Esophagus muscularis mucosa (tissue), 4 donors: ENCODE measurements at regions of chr1 and their contacts with region 1.

Region 1: DNA sequence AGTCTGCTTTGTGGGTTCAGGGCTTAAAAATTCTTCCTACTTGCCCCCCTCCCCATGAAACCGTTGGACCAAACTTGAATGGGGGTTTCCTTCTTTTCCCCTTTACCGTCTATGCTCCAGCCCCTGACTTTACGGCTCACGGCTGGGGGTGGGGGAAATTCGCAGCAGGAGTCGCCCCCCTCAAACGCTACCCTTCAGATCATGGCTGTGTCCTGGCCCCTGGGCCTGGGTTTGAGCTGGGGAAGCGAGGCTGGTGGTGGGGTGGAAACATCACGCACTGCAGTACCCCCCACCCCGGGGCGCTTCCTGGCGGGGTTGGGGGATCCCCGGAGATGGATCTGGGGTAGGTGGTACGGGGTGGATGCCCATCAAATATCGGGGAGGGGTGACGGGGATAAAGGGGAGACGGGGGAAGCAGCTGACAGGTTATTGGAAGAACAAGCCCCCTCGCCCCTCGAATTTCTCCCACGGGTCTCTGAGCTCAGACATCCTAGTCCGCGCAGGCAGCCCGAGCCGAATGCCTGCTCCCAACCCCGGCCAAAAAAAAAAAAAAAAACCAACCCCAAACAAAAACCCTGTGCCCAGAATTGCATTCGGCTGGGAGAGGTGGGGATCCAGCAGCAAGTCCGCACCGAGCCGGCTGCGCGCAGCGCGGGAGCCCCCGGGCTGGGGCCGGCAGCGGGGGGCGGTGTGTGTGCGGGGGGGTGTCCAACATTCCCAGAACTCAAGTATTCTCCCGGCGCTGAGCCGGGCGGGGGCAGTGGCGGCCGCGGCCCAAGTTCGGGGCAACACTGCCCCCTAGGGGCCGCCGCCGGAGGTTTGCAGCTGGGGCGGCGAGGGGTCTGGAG is 59.0 kb upstream of the ACOT11 start:
- DNase-seq: peak; percentile 95
- H3K4me3 ChIP-seq: peak overlapping the region; percentile 59 to 71 (median 66)
- H3K27ac ChIP-seq: peak overlapping the region; percentile 92 to 95 (median 94)
- H3K4me1 ChIP-seq: peaks cover 27 to 42% (median 38%) of the 10 kb centered on the region in 4 donors
- H3K27me3 ChIP-seq: no peaks in the 10 kb centered on the region
- CTCF ChIP-seq: peak; percentile 96 to 98 (median 97)
- EP300 ChIP-seq: no peak
- POLR2A ChIP-seq: no peak

Region 2: GRCh38 chr1:53869454-53870117 is 619.4 kb before region 1 on chr1:
- intact Hi-C with region 1: no loop called
- DNase-seq: no peak
- H3K4me3 ChIP-seq: no peak overlapping the region
- H3K27ac ChIP-seq: no peak overlapping the region
- H3K4me1 ChIP-seq: no peaks in the 10 kb centered on the region
- H3K27me3 ChIP-seq: no peaks in the 10 kb centered on the region
- CTCF ChIP-seq: no peak
- EP300 ChIP-seq: no peak
- POLR2A ChIP-seq: no peak

Region 3: DNA sequence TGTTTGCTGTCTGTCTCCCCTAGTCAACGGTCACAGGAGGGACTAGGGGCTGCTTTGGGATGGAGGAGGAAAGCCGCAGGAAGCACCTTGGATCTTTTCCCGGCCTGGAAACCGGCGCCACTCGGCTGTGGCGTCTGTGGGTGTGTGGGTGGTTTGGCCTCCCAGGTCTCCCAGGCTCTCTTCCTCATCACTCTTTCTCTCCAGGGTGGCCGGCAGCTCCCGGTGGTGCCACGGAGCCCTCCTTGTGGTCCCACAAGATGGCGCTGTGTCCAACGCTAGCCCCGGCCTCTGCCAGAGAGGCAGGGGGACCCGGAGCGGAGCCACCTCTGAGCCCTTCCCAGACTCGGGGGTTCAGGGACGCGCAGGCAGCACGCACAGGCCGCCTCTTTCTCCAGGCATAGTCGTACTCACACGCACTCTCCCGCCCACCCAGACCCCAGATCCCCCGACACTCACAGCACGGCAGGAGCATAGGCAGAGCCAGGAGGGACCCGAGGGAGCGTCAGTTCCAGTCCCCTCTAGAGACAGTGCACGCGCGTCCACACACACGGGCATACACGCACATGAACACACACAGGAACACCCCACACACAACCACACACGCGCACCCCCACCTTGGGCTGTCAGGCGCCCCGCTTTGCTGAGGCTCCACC is 367.4 kb before region 1 on chr1:
- intact Hi-C with region 1: loop called (anchors 1 kb)
- DNase-seq: no peak
- H3K4me3 ChIP-seq: peak overlapping the region; percentile 29 to 47 (median 33)
- H3K27ac ChIP-seq: no peak overlapping the region
- H3K4me1 ChIP-seq: peaks cover 8 to 14% (median 13%) of the 10 kb centered on the region in 4 donors
- H3K27me3 ChIP-seq: peaks cover 0 to 9% (median 0%) of the 10 kb centered on the region in 4 donors
- CTCF ChIP-seq: peak; percentile 70 to 85 (median 79)
- EP300 ChIP-seq: no peak
- POLR2A ChIP-seq: no peak

Region 4: DNA sequence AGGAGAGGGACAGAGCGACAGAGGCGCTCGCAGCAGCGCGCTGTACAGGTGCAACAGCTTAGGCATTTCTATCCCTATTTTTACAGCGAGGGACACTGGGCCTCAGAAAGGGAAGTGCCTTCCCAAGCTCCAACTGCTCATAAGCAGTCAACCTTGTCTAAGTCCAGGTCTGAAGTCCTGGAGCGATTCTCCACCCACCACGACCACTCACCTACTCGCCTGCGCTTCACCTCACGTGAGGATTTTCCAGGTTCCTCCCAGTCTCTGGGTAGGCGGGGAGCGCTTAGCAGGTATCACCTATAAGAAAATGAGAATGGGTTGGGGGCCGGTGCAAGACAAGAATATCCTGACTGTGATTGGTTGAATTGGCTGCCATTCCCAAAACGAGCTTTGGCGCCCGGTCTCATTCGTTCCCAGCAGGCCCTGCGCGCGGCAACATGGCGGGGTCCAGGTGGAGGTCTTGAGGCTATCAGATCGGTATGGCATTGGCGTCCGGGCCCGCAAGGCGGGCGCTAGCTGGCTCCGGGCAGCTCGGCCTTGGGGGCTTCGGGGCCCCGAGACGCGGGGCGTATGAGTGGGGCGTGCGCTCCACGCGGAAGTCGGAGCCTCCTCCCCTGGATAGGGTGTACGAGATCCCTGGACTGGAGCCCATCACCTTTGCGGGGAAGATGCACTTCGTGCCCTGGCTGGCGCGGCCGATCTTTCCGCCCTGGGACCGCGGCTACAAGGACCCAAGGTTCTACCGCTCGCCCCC is 289.1 kb before region 1 on chr1 and contains the starts of genes CYB5RL and MRPL37:
- intact Hi-C with region 1: loop called (anchors 5 kb)
- DNase-seq: peak; percentile 98
- H3K4me3 ChIP-seq: peak within 1 kb of the TSS; percentile 78 to 86 (median 84)
- H3K27ac ChIP-seq: peak within 1 kb of the TSS; percentile 81 to 85 (median 81)
- H3K4me1 ChIP-seq: peaks cover 14 to 33% (median 29%) of the 10 kb centered on the region in 4 donors
- H3K27me3 ChIP-seq: no peaks in the 10 kb centered on the region
- CTCF ChIP-seq: no peak
- EP300 ChIP-seq: no peak
- POLR2A ChIP-seq: no peak
- total RNA-seq, gene CYB5RL: 3.6 to 6.1 (median 3.9) TPM
- total RNA-seq, gene MRPL37: 54.2 to 62.1 (median 58.4) TPM

Region 5: GRCh38 chr1:54324251-54325140 is 164.5 kb before region 1 on chr1:
- intact Hi-C with region 1: loop called (anchors 5 kb)
- DNase-seq: no peak
- H3K4me3 ChIP-seq: no peak overlapping the region
- H3K27ac ChIP-seq: peak overlapping the region; percentile 80 to 85 (median 80)
- H3K4me1 ChIP-seq: peaks cover 70 to 88% (median 79%) of the 10 kb centered on the region in 4 donors
- H3K27me3 ChIP-seq: no peaks in the 10 kb centered on the region
- CTCF ChIP-seq: no peak
- EP300 ChIP-seq: no peak
- POLR2A ChIP-seq: no peak

Region 6: GRCh38 chr1:54413295-54413694 is 75.7 kb before region 1 on chr1:
- intact Hi-C with region 1: no loop called
- DNase-seq: no peak
- H3K4me3 ChIP-seq: no peak overlapping the region
- H3K27ac ChIP-seq: peak overlapping the region in 3 of 4 donors; percentile 6 to 28 (median 26)
- H3K4me1 ChIP-seq: peaks cover 16 to 25% (median 22%) of the 10 kb centered on the region in 4 donors
- H3K27me3 ChIP-seq: no peaks in the 10 kb centered on the region
- CTCF ChIP-seq: no peak
- EP300 ChIP-seq: no peak
- POLR2A ChIP-seq: no peak

Region 7: DNA sequence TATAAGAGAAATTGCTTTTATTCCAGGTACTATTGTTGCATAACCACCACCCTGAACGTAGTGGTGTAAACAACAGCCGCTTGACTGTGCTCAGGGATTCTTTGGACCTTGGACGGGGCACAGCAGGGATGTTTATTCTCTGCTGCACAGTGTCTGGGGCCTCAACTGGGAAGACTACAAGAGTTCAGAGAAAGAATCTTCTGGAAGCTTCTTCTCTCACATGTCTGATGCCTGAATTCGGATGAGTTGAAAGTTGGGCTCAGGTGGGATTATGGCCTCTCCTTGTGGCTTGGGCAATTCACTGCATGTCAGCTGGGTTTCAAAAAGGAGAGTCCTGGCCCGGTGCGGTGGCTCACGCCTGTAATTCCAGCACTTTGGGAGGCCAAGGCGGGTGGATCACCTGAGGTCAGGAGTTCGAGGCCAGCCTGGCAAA is 63.8 kb before region 1 on chr1:
- intact Hi-C with region 1: no loop called
- DNase-seq: no peak
- H3K4me3 ChIP-seq: no peak overlapping the region
- H3K27ac ChIP-seq: peak overlapping the region in 1 of 4 donors; percentile 43
- H3K4me1 ChIP-seq: no peaks in the 10 kb centered on the region
- H3K27me3 ChIP-seq: no peaks in the 10 kb centered on the region
- CTCF ChIP-seq: peak in 1 of 3 experiments; percentile 26
- EP300 ChIP-seq: no peak
- POLR2A ChIP-seq: no peak